Ovary (tissue), 10 donors: ENCODE measurements at regions of chr11 and their contacts with region 1.

Region 1: DNA sequence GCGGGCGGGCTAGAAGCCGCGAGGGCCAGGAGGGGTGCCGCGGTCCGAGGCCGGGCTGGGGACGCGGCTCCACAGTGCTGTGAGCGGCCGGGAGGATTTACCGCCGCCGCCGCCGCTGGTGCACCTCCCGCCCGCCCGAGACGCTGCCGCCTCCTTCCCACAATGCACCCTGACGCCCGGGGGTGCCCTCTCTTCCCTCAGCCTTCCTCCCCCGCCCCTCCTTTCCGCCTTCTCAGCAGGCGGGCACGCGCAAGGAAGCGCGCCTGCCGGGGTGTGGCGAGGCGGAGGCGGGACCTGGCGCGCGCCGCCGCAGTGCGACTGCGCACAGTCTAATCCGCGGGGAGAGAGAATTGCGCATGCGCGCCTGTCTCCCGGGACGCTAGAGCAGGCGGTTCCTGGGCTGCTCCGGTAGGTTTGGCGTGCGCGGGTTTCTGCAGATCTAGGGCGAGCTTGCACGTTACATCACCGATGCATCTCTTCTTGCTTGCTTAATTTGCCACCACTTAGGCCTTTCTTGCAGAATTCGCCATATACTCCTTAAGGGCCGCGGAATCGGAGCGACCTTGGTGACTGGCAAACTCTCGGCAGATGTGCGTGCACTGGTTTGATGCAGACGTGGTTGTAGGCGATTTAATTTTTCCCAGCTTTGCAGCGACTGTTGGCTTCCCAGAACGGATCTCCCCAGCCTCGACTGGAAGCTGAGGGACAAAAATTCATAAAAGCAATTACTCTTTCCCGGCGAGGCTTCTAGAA is at the starts of genes GVQW3 and THAP12:
- DNase-seq: peak; percentile 97 to 99 (median 98)
- H3K4me3 ChIP-seq: peak within 1 kb of the TSS; percentile 59
- H3K27ac ChIP-seq: peak within 1 kb of the TSS; percentile 53 to 73
- H3K4me1 ChIP-seq: peaks cover 9% of the 10 kb centered on the region
- H3K27me3 ChIP-seq: no peaks in the 10 kb centered on the region
- CTCF ChIP-seq: no peak
- EP300 ChIP-seq: no peak
- POLR2A ChIP-seq: no peak
- total RNA-seq, gene GVQW3: 2.5 to 4.7 (median 3.4) TPM
- total RNA-seq, gene THAP12: 30.6 to 55.6 (median 47.3) TPM

Region 2: GRCh38 chr11:76339221-76339620 is 41.9 kb before region 1 on chr11:
- intact Hi-C with region 1: no loop called
- DNase-seq: no peak
- H3K4me3 ChIP-seq: no peak overlapping the region
- H3K27ac ChIP-seq: no peak overlapping the region
- H3K4me1 ChIP-seq: no peaks in the 10 kb centered on the region
- H3K27me3 ChIP-seq: no peaks in the 10 kb centered on the region
- CTCF ChIP-seq: no peak
- EP300 ChIP-seq: no peak
- POLR2A ChIP-seq: no peak

Region 3: DNA sequence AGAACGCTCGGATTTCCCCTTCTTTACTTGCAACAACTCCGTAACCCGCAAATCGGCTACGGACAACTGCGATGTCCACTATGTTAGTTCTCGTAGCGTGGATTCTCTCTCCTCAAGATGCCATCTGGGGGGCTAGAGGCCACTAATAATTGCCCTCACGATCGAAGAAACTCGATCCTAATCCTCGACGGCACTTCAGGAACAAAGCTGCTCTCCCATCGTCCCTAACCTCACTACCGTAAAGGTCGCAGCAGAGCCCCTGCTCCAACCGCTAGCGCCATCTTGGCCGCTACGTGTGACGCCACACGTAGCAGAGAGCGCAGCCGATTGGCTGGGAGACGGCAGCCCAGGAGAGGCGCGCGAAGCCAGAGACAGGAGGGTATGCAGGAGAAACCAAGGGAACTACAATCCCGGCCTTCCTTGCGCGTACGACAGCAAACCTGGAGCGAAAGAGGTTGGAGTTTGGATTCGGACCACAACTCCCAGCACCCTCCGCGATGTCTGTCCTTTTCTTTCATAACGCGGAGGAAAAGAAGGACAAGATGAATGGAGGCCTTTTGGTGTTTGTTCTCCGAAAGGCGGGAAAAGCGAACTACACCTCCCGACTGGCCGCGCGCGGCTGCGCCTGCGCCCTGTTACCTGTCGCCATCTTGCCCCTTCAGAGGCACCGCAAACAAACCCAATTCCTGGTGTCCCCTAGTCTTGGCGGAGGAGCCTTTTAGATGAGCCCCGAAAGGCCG is 63.4 kb after region 1 on chr11 and contains the start of gene EMSY:
- intact Hi-C with region 1: loop called in 2 of 4 experiments (anchors 5 kb)
- DNase-seq: peak; percentile 93 to 96 (median 94)
- H3K4me3 ChIP-seq: peak within 1 kb of the TSS; percentile 99
- H3K27ac ChIP-seq: peak within 1 kb of the TSS; percentile 74 to 84
- H3K4me1 ChIP-seq: peaks cover 5% of the 10 kb centered on the region
- H3K27me3 ChIP-seq: no peaks in the 10 kb centered on the region
- CTCF ChIP-seq: no peak
- EP300 ChIP-seq: no peak
- POLR2A ChIP-seq: peak; percentile 99
- total RNA-seq, gene EMSY: 24.2 to 56.0 (median 30.0) TPM